Gastrocnemius medialis (tissue), 4 donors: ENCODE measurements at regions of chr17 and their contacts with region 1.

Region 1: GRCh38 chr17:44344939-44345453 is at the start of gene GRN:
- DNase-seq: peak; percentile 94 to 95
- ATAC-seq: peak; percentile 99 to 100
- H3K4me3 ChIP-seq: peak within 1 kb of the TSS; percentile 73 to 87 (median 78)
- H3K27ac ChIP-seq: peak within 1 kb of the TSS; percentile 83 to 93 (median 84)
- H3K4me1 ChIP-seq: peaks cover 7 to 8% of the 10 kb centered on the region in 2 donors
- H3K27me3 ChIP-seq: no peaks in the 10 kb centered on the region
- CTCF ChIP-seq: no peak
- POLR2A ChIP-seq: peak; percentile 67 to 84
- total RNA-seq, gene GRN: 64.2 to 111 (median 87.1) TPM

Region 2: DNA sequence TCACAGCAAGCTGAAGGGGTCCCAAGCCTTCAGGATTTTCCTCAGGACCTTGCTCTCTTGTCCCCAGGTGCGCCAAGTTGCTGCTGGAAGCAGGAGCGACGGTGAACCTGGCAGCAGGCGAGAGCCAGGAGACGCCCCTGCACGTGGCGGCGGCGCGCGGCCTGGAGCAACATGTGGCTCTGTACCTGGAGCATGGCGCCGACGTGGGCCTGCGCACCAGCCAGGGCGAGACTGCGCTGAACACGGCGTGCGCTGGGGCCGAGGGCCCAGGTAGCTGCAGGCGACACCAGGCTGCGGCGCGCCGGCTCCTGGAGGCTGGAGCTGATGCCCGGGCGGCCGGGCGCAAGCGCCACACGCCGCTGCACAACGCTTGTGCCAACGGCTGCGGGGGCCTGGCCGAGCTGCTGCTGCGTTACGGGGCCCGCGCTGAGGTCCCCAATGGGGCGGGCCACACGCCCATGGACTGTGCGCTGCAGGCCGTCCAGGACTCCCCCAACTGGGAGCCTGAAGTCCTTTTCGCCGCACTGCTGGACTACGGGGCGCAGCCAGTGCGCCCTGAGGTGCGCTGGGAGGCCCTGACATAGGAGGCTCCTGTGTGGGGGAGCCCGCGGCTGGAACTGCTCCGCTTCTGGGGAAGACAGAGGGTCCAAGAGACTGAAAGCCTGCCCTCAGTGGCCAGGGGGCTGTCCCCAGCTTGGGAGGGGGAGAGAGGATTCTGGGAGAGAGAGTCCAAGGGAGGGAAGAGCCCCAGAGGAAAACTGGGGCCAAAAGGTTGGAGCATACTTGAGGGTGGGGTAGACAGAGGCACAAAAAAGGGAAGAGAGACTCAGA is 168.1 kb before region 1 on chr17:
- in situ Hi-C with region 1: no loop called
- intact Hi-C with region 1: no loop called
- DNase-seq: no peak
- ATAC-seq: no peak
- H3K4me3 ChIP-seq: no peak overlapping the region
- H3K27ac ChIP-seq: peak overlapping the region in 1 of 4 donors; percentile 51
- H3K4me1 ChIP-seq: peaks cover 15 to 17% of the 10 kb centered on the region in 2 donors
- H3K27me3 ChIP-seq: no peaks in the 10 kb centered on the region
- CTCF ChIP-seq: no peak
- POLR2A ChIP-seq: no peak

Region 3: GRCh38 chr17:44210342-44211192 is 134.4 kb before region 1 on chr17:
- in situ Hi-C with region 1: no loop called
- intact Hi-C with region 1: loop called (anchors 5 kb)
- DNase-seq: peak; percentile 64 to 87
- ATAC-seq: peak; percentile 90 to 92
- H3K4me3 ChIP-seq: peak overlapping the region in 1 of 4 donors; percentile 34
- H3K27ac ChIP-seq: peak overlapping the region; percentile 50 to 80 (median 60)
- H3K4me1 ChIP-seq: peaks cover 26 to 39% of the 10 kb centered on the region in 2 donors
- H3K27me3 ChIP-seq: no peaks in the 10 kb centered on the region
- CTCF ChIP-seq: peak; percentile 99 to 100 (median 99)
- POLR2A ChIP-seq: peak in 1 of 2 donors; percentile 25

Region 4: DNA sequence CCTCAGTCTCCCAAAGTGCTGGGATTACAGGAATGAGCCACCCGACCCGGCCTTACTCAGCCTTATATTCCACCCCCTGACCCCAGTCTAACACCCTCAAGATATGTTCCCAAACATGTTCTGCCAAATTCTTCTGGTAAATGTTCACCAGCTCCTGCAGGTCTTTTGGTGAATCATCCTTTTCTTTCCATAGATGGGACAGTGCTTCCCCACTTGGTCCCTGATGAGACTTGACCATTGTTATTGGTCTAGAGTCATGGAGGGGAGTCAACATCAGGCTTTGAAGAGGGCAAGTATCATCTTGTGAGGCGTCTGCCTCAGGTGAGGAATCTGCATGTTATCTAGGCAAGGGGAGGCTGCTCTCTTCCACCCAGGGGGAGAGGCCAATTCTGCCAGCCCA is 47.0 kb before region 1 on chr17:
- in situ Hi-C with region 1: no loop called
- intact Hi-C with region 1: loop called (anchors 2 kb)
- DNase-seq: no peak
- ATAC-seq: no peak
- H3K4me3 ChIP-seq: no peak overlapping the region
- H3K27ac ChIP-seq: no peak overlapping the region
- H3K4me1 ChIP-seq: no peaks in the 10 kb centered on the region
- H3K27me3 ChIP-seq: peaks cover 0 to 3% (median 0%) of the 10 kb centered on the region in 3 donors
- CTCF ChIP-seq: no peak
- POLR2A ChIP-seq: no peak